ENCODE measurements at regions of chr17 and their contacts with region 1.

Region 1: GRCh38 chr17:43367737-43368242 is 31.0 kb upstream of the ARL4D start:
- DNase-seq: peak; percentile 90 to 92
- ATAC-seq: peak; percentile 70 to 74
- H3K4me3 ChIP-seq: peak overlapping the region; percentile 44; the same call in 2 of the 3 replicates
- H3K27ac ChIP-seq: peak overlapping the region; percentile 94
- H3K4me1 ChIP-seq: peaks cover 22% of the 10 kb centered on the region
- CTCF ChIP-seq: no peak
- EP300 ChIP-seq: no peak
- POLR2A ChIP-seq: peak; percentile 97
- RAD21 ChIP-seq: no peak; a peak in 1 of 5 replicates

Region 2: DNA sequence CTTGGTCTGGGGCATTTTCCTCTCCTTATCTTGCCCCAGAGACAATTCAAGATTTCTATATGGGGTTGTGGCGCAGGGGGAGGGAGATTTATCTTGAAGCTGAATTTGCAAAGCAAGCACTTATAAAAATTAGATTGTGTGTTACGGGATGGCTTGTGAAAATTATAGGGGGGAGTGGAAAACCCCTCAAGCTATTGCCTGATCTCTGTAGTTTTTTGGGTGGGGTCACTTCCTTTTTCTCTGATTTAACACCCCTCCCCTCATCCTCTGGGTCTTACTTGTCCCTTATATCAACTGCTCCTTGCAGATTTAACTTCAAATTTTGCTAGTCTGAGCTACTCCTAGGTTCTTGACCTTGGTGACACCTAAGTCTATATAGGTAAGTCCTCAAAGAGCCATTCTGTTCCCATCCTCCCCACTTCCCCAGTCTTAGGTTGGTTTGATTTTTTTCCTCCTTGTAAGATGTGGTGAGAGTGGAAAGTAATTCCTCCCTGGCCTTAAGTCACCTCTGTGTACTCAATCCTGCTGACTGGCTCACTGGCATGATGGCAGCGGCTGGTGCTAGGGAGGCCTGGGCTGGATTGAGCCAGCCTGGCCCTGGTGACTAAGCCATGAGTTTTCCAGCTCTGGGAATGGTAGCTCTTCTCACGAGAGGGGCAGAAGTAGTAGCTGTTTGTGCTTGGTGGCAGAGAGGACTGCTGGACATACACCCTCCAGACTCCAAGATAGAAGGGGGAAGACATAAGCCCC is 33.3 kb after region 1 on chr17:
- CTCF ChIA-PET with region 1: interaction called, 4 read pairs
- POLR2A ChIA-PET with region 1: interaction called, 49 read pairs
- DNase-seq: peak; percentile 75 to 81
- ATAC-seq: peak; percentile 65 to 66
- H3K4me3 ChIP-seq: peak overlapping the region; percentile 71; the same call in 2 of the 3 replicates
- H3K27ac ChIP-seq: peak overlapping the region; percentile 52 to 95
- H3K4me1 ChIP-seq: peaks cover 35% of the 10 kb centered on the region
- CTCF ChIP-seq: no peak
- EP300 ChIP-seq: no peak
- POLR2A ChIP-seq: no peak
- RAD21 ChIP-seq: no peak

Measured in A549 (cell line).